ENCODE measurements at regions of chr6 and their contacts with region 1.

Region 1: DNA sequence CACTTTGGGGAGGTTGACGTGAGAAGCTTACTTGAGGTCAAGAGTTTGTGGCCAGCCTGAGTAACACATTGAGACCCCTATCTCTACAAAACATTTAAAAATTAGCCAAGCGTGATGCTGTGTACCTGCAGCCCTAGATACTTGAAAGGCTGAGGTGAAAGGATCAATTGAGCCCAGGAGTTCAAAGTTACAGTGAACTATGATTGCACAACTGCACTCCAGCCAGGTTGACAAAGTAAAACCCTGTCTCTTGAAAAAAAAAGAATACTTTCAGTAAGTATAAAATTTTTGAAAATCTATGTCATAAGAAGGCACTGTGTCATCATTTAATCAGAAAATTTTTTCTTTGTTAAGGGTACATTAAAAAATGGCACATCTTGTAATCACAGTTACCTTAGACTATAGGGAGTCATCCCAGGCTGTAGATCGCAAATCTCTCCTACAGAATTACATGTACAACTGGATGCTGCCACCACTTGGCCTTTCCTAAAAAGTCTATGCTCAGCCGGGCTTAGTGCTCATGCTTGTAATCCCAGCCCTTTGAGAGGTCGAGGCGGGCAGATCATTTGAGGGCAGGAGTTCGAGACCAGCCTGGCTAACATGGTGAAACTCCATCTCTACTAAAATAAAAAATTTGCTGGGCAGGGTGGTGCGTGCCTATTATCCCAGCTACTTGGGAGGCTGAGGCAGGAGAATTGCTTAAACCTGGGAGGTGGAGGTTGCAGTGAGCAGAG is 17.0 kb upstream of the MRS2 start:
- DNase-seq: no peak
- ATAC-seq: no peak
- H3K4me3 ChIP-seq: no peak overlapping the region
- H3K27ac ChIP-seq: no peak overlapping the region
- H3K4me1 ChIP-seq: peaks cover 18% of the 10 kb centered on the region
- H3K27me3 ChIP-seq: no peaks in the 10 kb centered on the region
- CTCF ChIP-seq: no peak

Region 2: GRCh38 chr6:24064082-24064481 is 321.6 kb before region 1 on chr6:
- CTCF ChIA-PET with region 1: no interaction called
- POLR2A ChIA-PET with region 1: no interaction called
- intact Hi-C with region 1: loop called (anchors 10 kb)
- DNase-seq: peak; percentile 57
- ATAC-seq: peak; percentile 55; the same call in 1 of the 2 replicates
- H3K4me3 ChIP-seq: no peak overlapping the region
- H3K27ac ChIP-seq: no peak overlapping the region
- H3K4me1 ChIP-seq: no peaks in the 10 kb centered on the region
- H3K27me3 ChIP-seq: peaks cover 24% of the 10 kb centered on the region
- CTCF ChIP-seq: peak; percentile 83

Region 3: DNA sequence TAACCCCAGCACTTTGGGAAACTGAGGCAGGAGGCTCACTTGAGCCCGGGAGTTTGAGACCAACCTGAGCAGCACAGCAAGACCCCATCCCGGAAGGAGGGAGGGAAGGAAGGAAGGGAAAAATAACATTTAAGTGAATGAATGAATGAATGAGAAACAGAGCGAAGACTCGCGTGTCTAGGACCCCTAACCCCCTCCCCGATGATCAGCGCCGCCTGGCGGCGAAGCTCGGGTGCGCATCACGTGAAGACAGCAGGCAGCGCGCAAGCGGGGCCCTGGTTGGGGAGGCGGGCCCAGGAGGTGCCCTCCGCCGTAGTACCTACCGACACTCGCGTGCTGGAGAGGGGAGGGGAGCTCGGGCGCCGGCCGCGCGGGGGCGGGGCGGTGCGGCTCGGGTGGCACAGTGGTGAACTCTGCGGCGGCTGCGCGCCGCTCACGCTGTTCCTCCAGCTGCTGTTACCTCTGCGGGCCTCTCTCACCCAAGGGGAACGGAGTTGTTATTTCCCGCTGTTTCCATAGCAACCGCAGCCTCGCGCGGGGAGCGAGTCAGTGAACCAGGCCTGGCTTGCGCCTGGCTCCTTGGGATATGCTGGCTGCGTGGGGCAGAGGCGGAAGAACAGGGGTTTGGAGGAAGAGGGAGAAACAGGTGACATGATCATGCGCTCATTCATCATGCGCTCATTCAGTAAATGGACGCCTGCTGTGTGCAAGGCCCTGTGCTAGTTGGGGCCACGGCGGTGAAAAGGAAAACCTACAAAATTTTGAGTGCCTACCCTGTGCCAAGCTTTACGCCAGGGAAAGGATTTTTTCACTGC is 25.9 kb before region 1 on chr6:
- CTCF ChIA-PET with region 1: interaction called, 24 read pairs
- POLR2A ChIA-PET with region 1: no interaction called
- intact Hi-C with region 1: loop called (anchors 2 kb)
- DNase-seq: peak; percentile 93
- ATAC-seq: peak; percentile 98
- H3K4me3 ChIP-seq: peak overlapping the region; percentile 69
- H3K27ac ChIP-seq: peak overlapping the region; percentile 7; the same call in 1 of the 2 replicates
- H3K4me1 ChIP-seq: peaks cover 8% of the 10 kb centered on the region
- H3K27me3 ChIP-seq: no peaks in the 10 kb centered on the region
- CTCF ChIP-seq: peak; percentile 92

Measured in PC-3 (cell line).